ENCODE measurements at regions of chr1 and their contacts with region 1.

Region 1: GRCh38 chr1:35298464-35298863 is 30.0 kb downstream of the ZMYM4 start:
- DNase-seq: peak; percentile 87 to 90
- H3K4me3 ChIP-seq: no peak overlapping the region
- H3K27ac ChIP-seq: peak overlapping the region in 1 of 3 donors; percentile 34
- H3K4me1 ChIP-seq: peaks cover 13 to 18% of the 10 kb centered on the region in 2 donors
- H3K27me3 ChIP-seq: no peaks in the 10 kb centered on the region
- CTCF ChIP-seq: peak in 5 of 6 experiments; percentile 12 to 74 (median 60)
- POLR2A ChIP-seq: no peak

Region 2: GRCh38 chr1:35190784-35191183 is 107.7 kb before region 1 on chr1:
- intact Hi-C with region 1: no loop called
- DNase-seq: no peak
- H3K4me3 ChIP-seq: peak overlapping the region; percentile 94 to 100 (median 98)
- H3K27ac ChIP-seq: peak overlapping the region in 1 of 3 donors; percentile 92
- H3K4me1 ChIP-seq: peaks cover 21 to 22% of the 10 kb centered on the region in 2 donors
- H3K27me3 ChIP-seq: no peaks in the 10 kb centered on the region
- CTCF ChIP-seq: no peak
- POLR2A ChIP-seq: no peak

Region 3: DNA sequence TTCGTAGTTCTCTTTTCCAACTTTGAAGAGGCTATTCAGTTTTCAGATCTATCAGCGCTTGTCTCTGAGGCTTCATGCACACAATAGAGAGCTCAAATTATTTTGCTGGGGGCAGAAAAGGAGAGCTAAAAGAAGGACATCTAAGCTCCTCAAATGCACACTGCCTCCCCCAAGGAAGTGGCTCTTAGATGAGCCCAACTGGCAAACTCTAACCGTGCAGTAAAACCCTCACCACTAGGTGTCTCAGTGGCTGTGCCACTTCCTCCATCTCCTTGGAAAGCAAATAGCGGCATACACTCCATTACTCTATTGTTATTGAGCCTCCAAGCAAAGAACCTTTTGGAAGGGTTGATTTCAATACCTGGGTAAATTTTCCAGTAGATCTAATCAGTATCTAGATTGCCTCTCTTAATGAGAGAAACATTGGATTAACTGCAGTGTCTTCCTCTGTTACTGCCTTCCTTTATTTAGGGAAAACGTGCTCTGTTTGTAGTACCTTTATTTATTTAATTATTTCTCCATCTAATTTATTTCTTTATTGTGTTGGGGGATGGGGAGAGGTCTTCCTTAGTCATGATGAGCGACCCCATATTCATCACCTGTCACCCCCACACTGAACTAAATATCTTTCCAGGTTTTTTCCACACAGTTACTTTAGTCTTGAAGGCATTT is 96.3 kb before region 1 on chr1:
- intact Hi-C with region 1: loop called (anchors 5 kb)
- DNase-seq: peak; percentile 67 to 71
- H3K4me3 ChIP-seq: no peak overlapping the region
- H3K27ac ChIP-seq: no peak overlapping the region
- H3K4me1 ChIP-seq: peaks cover 0 to 3% of the 10 kb centered on the region in 2 donors
- H3K27me3 ChIP-seq: no peaks in the 10 kb centered on the region
- CTCF ChIP-seq: peak; percentile 53 to 84 (median 74)
- POLR2A ChIP-seq: no peak

Region 4: DNA sequence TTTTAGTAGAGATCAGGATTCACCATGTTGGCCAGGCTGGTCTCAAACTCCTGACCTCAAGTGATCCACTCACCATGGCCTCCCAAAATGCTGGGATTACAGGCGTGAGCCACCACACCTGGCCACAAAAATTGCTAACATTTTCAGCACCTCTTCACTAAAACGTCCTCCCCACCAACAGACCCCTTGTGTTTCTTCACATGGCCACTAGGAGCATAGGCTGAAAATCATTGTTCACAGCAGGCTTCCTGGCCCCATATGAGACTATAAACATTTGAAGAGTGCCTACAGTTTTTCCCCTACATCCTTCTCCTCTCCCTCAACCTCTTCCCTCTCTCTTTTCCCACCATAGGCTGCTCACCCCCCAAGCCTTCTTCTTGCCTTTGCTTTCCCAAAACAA is 77.5 kb before region 1 on chr1:
- intact Hi-C with region 1: no loop called
- DNase-seq: no peak
- H3K4me3 ChIP-seq: no peak overlapping the region
- H3K27ac ChIP-seq: no peak overlapping the region
- H3K4me1 ChIP-seq: no peaks in the 10 kb centered on the region
- H3K27me3 ChIP-seq: no peaks in the 10 kb centered on the region
- CTCF ChIP-seq: peak in 2 of 6 experiments; percentile 18 to 25
- POLR2A ChIP-seq: no peak

Region 5: GRCh38 chr1:35488336-35488735 is 189.9 kb after region 1 on chr1:
- intact Hi-C with region 1: no loop called
- DNase-seq: no peak
- H3K4me3 ChIP-seq: no peak overlapping the region
- H3K27ac ChIP-seq: no peak overlapping the region
- H3K4me1 ChIP-seq: no peaks in the 10 kb centered on the region
- H3K27me3 ChIP-seq: no peaks in the 10 kb centered on the region
- CTCF ChIP-seq: no peak
- POLR2A ChIP-seq: no peak

Region 6: GRCh38 chr1:35505908-35506798 is 207.7 kb after region 1 on chr1:
- intact Hi-C with region 1: no loop called
- DNase-seq: peak; percentile 69
- H3K4me3 ChIP-seq: no peak overlapping the region
- H3K27ac ChIP-seq: peak overlapping the region in 2 of 3 donors; percentile 55 to 57
- H3K4me1 ChIP-seq: peaks cover 34 to 52% of the 10 kb centered on the region in 2 donors
- H3K27me3 ChIP-seq: no peaks in the 10 kb centered on the region
- CTCF ChIP-seq: no peak
- POLR2A ChIP-seq: no peak

Measured in thyroid gland (tissue), 4 donors.